ENCODE measurements at regions of chr5 and their contacts with region 1.

Region 1: DNA sequence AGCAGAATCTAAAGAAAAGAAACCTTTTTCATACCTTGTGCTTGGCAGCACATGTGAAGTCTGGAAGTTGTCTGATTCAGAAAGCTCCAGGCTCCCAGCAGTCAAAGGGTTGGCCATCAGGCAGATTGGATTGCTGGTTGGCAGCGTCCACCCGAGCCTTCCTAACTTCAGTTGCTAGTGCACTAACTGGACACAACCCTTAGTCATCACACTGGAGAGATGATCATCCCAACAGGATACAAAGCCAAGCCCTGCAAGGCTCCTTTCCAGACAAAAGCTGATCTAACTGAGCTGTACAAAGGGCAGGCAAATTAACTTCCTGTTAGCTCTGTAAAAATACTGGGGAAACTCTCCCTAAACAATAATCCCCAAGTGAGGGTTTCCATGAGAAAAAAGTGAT is 185.6 kb downstream of the SNX18 start:
- DNase-seq: peak; percentile 84 to 88
- ATAC-seq: peak; percentile 76
- H3K4me3 ChIP-seq: peak overlapping the region in 1 of 2 donors; percentile 38
- H3K27ac ChIP-seq: peak overlapping the region; percentile 96 to 100
- H3K4me1 ChIP-seq: peaks cover 17 to 21% of the 10 kb centered on the region in 2 donors
- H3K27me3 ChIP-seq: no peaks in the 10 kb centered on the region

Region 2: DNA sequence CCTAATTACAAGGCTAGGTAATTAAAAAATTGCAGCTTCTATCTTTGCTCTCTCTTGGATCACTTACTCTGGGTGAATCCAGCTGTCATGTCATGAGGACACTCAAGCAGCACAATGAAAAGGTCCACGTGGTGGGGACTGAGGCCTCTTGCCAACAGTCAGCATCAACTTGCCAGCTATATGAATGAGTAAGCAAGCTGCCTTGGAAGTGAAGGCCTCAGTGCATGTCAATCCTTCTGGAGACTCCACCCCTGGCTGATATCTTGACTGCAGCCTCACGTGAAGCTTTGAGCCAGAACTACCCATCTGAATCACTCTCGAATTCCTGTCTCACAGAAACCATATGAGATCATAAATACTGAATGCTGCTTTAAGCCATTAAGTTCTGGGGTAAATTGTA is 45.1 kb before region 1 on chr5:
- intact Hi-C with region 1: loop called (anchors 5 kb)
- DNase-seq: no peak
- ATAC-seq: no peak
- H3K4me3 ChIP-seq: no peak overlapping the region
- H3K27ac ChIP-seq: peak overlapping the region in 1 of 2 donors; percentile 47
- H3K4me1 ChIP-seq: peaks cover 0 to 6% of the 10 kb centered on the region in 2 donors
- H3K27me3 ChIP-seq: no peaks in the 10 kb centered on the region

Region 3: GRCh38 chr5:54663866-54664265 is 39.3 kb before region 1 on chr5:
- intact Hi-C with region 1: loop called (anchors 5 kb)
- DNase-seq: peak; percentile 72 to 80
- ATAC-seq: peak; percentile 75
- H3K4me3 ChIP-seq: no peak overlapping the region
- H3K27ac ChIP-seq: no peak overlapping the region
- H3K4me1 ChIP-seq: no peaks in the 10 kb centered on the region
- H3K27me3 ChIP-seq: no peaks in the 10 kb centered on the region

Region 4: GRCh38 chr5:54719384-54720283 is 16.5 kb after region 1 on chr5:
- intact Hi-C with region 1: loop called in 1 of 2 experiments (anchors 2 kb)
- DNase-seq: peak in 1 of 2 donors; percentile 56
- ATAC-seq: peak; percentile 61
- H3K4me3 ChIP-seq: no peak overlapping the region
- H3K27ac ChIP-seq: peak overlapping the region; percentile 52 to 82
- H3K4me1 ChIP-seq: peaks cover 0 to 11% of the 10 kb centered on the region in 2 donors
- H3K27me3 ChIP-seq: no peaks in the 10 kb centered on the region

Region 5: DNA sequence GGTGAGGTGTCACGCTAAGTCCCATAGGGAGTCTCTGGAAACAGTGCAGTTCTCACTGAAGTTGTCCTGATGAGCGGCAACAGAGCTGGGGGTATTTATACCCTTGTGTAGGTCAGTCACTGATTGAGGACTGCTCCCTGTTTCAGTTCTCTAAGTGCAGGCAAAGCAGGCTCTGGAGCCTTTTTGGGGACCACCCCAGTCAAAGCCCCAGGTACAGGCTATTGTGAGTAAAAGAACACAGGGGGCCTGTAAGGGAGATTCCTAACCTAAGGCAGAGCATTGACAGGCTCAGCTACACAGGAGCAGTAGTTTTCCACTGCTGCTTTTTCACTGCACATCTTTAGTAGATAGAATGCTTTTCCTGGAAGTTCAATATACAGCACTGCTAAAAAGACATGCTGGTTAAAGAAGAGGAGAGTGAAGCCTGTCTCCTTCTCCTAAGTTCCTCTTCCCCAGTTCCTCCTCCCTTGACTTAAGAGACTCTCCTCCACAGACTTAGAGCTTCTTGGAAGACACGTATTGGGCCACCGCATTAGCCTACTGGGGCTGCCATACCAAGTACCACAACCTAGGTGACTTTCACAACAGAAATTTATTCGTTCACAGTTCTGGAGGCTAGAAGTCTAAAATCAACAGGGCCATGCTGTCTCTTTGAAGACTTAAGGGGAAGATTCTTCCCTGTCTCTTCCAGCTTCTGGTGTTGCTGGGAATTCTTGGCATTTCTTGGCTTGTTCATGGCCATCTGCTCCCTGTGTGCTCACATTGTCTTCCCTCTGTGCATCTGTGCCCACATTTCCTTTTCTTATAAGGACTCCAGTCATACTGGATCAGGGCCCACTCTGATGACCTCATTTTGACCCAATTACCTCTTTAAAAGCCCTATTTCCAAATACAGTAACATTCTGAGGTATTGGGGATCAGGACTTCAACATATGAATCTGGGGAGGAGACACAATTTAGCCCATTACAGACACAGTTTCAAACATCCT is 61.3 kb after region 1 on chr5:
- intact Hi-C with region 1: no loop called
- DNase-seq: no peak
- ATAC-seq: no peak
- H3K4me3 ChIP-seq: no peak overlapping the region
- H3K27ac ChIP-seq: no peak overlapping the region
- H3K4me1 ChIP-seq: peaks cover 10% of the 10 kb centered on the region in 2 donors
- H3K27me3 ChIP-seq: no peaks in the 10 kb centered on the region

Region 6: DNA sequence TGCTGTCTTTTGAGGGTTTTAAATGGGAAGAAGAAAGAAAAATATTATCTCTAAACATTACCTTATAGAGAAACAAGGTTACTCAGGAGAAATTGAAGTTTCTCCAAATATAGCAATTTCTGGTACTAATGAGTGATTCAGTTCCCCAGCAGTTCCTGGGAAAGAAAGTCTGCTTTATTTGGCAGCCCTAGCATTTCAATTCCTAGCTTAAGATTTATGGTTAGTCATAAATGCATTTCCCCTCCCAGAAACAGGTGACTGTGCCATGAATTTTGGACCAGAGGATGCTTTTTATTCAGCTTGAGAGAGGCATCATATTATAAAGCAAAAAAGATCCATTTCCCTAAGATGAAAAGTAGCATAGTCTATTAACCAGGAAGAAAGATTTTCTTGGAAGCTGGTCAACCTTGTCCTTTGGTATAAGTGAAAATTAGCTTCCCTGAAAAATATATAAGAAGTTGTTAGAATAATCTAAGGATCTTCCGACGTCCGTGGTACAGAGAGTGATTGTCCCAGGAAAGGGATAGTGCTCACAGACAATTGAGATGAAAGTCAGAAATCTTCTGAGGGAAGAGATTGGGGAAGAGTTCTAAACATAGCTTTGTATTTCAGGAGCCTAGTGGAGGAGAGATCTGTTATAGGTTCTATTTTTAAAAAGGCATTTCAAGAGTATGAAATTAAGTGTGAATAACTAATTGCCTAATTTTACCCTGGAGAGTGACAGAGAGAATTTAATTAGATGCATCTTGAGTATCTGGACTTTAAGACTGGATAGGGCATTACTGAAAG is 117.4 kb after region 1 on chr5:
- intact Hi-C with region 1: loop called in 1 of 2 experiments (anchors 5 kb)
- DNase-seq: no peak
- ATAC-seq: no peak
- H3K4me3 ChIP-seq: no peak overlapping the region
- H3K27ac ChIP-seq: peak overlapping the region; percentile 75 to 76
- H3K4me1 ChIP-seq: peaks cover 2 to 4% of the 10 kb centered on the region in 2 donors
- H3K27me3 ChIP-seq: no peaks in the 10 kb centered on the region

Region 7: DNA sequence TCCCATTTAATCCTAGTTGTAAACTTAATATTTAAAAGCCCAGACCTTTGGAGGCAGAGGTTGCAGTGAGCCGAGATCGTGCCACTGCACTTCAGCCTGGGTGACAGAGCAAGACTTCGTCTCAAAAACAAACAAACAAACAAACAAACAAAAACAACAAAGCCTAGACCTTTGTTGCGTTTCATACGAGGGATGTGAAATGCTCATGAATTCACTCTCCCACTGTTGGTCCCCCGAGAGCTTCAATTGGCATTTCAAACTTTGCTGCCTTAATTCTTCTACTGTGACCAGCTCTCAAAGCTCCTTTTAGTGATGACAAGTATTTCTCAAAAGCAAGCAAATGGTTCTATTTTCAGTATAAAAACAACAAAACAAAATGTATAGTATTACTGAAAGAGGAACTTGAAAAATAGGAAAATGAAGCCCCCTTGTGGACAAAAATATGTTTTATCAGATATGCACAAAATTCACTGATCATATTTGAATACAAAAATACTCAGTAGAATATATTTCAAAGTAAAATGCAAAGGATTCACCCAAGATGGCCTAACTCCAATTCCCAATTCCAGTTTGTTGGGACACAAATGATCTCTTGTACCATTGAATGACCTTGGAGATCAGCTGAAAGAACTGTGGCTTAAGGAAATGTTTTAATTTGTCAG is 141.9 kb after region 1 on chr5:
- intact Hi-C with region 1: loop called (anchors 5 kb)
- DNase-seq: no peak
- ATAC-seq: peak; percentile 74
- H3K4me3 ChIP-seq: no peak overlapping the region
- H3K27ac ChIP-seq: peak overlapping the region in 1 of 2 donors; percentile 79
- H3K4me1 ChIP-seq: peaks cover 0 to 3% of the 10 kb centered on the region in 2 donors
- H3K27me3 ChIP-seq: no peaks in the 10 kb centered on the region